Activated naive CD8-positive, alpha-beta T cell treated with anti-CD3 and anti-CD28 coated beads, Interleukin-2, amount 10 ng/mL, durations not matched to agents 7 days and 5 days (primary cell): ENCODE measurements at regions of chr15 and their contacts with region 1.

Region 1: GRCh38 chr15:72375847-72376581 is at the start of gene HEXA:
- DNase-seq: peak; percentile 99
- ATAC-seq: peak; percentile 83
- H3K4me3 Mint-ChIP-seq: peak within 1 kb of the TSS; percentile 95
- H3K27ac Mint-ChIP-seq: peak within 1 kb of the TSS; percentile 99
- H3K4me1 Mint-ChIP-seq: peaks cover 32% of the 10 kb centered on the region
- H3K27me3 Mint-ChIP-seq: no peaks in the 10 kb centered on the region
- total RNA-seq, gene HEXA: 92.2 to 97.0 TPM

Region 2: DNA sequence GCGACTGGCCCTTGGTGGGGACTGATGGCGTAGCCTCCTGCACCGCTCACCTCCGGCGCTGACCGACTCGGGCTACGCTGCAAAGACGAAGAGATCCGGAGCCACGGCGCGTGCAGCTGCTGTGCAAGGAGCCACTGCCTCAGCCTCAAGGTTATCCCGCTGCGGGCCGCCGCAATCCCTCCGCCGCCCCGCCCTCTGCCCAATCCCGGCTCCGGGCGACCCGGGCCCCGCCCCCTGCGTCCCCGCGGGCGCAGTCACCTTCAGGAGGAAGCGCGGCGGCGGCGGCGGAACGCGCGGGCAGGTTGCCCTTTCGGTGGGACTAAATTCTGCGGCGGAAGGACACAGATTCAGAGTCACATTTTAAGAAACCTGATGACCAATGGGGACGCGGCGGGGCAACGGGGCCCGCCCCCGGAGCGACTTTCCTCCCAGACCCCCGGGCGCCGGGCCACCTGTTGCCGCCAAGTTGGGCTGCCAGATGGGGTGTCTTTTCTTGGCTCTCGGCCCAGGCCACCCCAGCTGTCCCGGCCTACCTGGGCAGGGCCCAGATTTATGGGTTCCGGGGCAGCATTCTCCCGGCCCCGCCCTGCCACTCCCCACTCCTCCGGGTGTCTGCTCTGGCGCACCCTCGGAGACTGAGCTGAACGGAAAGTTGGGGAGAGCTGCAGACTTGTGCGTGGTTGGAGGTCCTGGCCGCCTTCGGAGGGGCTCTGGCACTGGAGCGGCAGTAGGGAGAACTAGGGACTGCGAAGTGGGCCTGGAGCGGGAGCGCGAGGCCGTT is 144.8 kb before region 1 on chr15 and contains the start of gene PKM:
- POLR2A ChIA-PET with region 1: interaction called, 11 read pairs
- DNase-seq: peak; percentile 98
- ATAC-seq: peak; percentile 58
- H3K4me3 Mint-ChIP-seq: peak within 1 kb of the TSS; percentile 100
- H3K27ac Mint-ChIP-seq: peak within 1 kb of the TSS; percentile 99
- H3K4me1 Mint-ChIP-seq: peaks cover 38% of the 10 kb centered on the region
- H3K27me3 Mint-ChIP-seq: no peaks in the 10 kb centered on the region
- total RNA-seq, gene PKM: 965 to 980 TPM

Region 3: DNA sequence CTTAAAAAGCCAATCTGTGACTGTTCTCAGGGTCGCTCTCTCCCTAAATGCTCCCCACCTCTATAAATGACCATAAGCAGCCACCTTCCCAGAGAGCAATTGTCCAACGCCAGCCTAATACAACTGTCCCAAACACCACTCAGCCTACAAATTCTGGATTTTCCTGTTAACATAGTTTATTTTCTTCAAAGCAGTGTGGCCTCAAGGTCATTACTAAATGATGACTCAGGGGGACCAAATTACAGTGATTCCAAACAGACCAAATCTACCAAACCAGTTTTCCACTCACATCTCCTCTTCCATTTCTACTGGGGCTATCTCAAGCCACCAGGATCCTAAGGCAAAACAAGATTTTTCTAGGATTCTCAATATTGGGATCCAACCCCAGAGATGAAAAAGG is 22.7 kb before region 1 on chr15:
- POLR2A ChIA-PET with region 1: no interaction called
- DNase-seq: no peak
- ATAC-seq: no peak
- H3K4me3 Mint-ChIP-seq: no peak overlapping the region
- H3K27ac Mint-ChIP-seq: no peak overlapping the region
- H3K4me1 Mint-ChIP-seq: peaks cover 6% of the 10 kb centered on the region
- H3K27me3 Mint-ChIP-seq: no peaks in the 10 kb centered on the region

Region 4: GRCh38 chr15:72365844-72366243 is 10.2 kb before region 1 on chr15:
- POLR2A ChIA-PET with region 1: interaction called, 32 read pairs
- DNase-seq: peak; percentile 45
- ATAC-seq: peak; percentile 96
- H3K4me3 Mint-ChIP-seq: peak overlapping the region; percentile 41
- H3K27ac Mint-ChIP-seq: peak overlapping the region; percentile 40
- H3K4me1 Mint-ChIP-seq: peaks cover 31% of the 10 kb centered on the region
- H3K27me3 Mint-ChIP-seq: no peaks in the 10 kb centered on the region

Region 5: GRCh38 chr15:72464251-72464650 is 88.2 kb after region 1 on chr15:
- POLR2A ChIA-PET with region 1: interaction called, 12 read pairs
- DNase-seq: no peak
- ATAC-seq: no peak
- H3K4me3 Mint-ChIP-seq: no peak overlapping the region
- H3K27ac Mint-ChIP-seq: no peak overlapping the region
- H3K4me1 Mint-ChIP-seq: peaks cover 14% of the 10 kb centered on the region
- H3K27me3 Mint-ChIP-seq: no peaks in the 10 kb centered on the region

Region 6: DNA sequence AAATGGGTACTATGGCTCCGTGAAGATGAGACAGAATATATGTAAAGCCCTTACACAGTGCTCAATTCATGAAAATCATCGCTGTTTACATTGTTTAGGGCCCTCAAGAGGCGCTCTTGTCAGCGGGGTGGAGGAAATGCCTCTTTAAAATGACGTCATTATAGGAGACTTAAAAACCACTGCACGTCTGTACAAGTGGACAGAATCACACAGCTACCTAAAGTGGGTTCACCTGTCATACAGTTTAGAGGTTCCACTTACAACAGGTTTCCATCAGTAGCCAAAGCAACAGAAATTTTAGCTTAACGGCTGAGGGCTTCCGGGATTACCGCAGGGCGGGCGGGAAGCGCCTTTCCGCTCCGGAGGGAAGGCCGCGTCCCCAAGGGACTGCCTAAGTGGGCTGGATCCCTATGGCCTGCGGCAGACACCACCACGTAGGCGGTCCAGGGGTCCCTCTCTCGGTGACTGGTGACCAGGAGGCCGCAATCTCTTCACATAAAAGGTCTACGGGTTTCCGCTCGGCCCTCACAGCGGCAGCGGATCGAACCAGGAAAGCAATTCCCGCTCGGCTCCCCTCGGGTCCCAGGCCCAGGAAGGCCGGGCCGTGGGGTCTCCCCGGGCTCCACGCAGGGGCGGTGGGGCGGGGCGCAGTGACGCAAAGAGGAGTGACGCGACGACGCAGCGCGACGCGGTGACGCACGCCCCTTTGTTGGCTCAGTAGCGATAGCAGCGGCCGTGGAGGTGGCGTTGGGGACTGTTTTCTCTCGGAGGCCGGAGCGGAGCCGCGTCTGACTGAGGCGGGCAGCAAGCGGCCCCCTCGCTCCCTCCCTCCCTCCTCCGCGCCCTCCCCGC is 97.8 kb after region 1 on chr15 and contains the start of gene ARIH1:
- POLR2A ChIA-PET with region 1: interaction called, 32 read pairs
- DNase-seq: peak; percentile 97
- ATAC-seq: peak; percentile 68
- H3K4me3 Mint-ChIP-seq: peak within 1 kb of the TSS; percentile 89
- H3K27ac Mint-ChIP-seq: peak within 1 kb of the TSS; percentile 96
- H3K4me1 Mint-ChIP-seq: peaks cover 27% of the 10 kb centered on the region
- H3K27me3 Mint-ChIP-seq: no peaks in the 10 kb centered on the region
- total RNA-seq, gene ARIH1: 141 to 165 TPM